Activated CD4-positive, alpha-beta memory T cell treated with anti-CD3 and anti-CD28 coated beads for 36 hours (primary cell): ENCODE measurements at regions of chrX and their contacts with region 1.

Region 1: GRCh38 chrX:130401415-130402207 is at the start of gene RBMX2:
- DNase-seq: peak; percentile 76
- H3K4me3 Mint-ChIP-seq: peak within 1 kb of the TSS; percentile 83
- H3K27ac Mint-ChIP-seq: peak within 1 kb of the TSS; percentile 87
- H3K4me1 Mint-ChIP-seq: peaks cover 26% of the 10 kb centered on the region
- H3K27me3 Mint-ChIP-seq: peaks cover 6% of the 10 kb centered on the region
- total RNA-seq, gene RBMX2: 28.4 to 29.8 TPM

Region 2: GRCh38 chrX:130186651-130187050 is 215.0 kb before region 1 on chrX:
- CTCF ChIA-PET with region 1: no interaction called
- POLR2A ChIA-PET with region 1: no interaction called
- intact Hi-C with region 1: no loop called
- DNase-seq: no peak
- H3K4me3 Mint-ChIP-seq: no peak overlapping the region
- H3K27ac Mint-ChIP-seq: no peak overlapping the region
- H3K4me1 Mint-ChIP-seq: peaks cover 9% of the 10 kb centered on the region
- H3K27me3 Mint-ChIP-seq: no peaks in the 10 kb centered on the region

Region 3: DNA sequence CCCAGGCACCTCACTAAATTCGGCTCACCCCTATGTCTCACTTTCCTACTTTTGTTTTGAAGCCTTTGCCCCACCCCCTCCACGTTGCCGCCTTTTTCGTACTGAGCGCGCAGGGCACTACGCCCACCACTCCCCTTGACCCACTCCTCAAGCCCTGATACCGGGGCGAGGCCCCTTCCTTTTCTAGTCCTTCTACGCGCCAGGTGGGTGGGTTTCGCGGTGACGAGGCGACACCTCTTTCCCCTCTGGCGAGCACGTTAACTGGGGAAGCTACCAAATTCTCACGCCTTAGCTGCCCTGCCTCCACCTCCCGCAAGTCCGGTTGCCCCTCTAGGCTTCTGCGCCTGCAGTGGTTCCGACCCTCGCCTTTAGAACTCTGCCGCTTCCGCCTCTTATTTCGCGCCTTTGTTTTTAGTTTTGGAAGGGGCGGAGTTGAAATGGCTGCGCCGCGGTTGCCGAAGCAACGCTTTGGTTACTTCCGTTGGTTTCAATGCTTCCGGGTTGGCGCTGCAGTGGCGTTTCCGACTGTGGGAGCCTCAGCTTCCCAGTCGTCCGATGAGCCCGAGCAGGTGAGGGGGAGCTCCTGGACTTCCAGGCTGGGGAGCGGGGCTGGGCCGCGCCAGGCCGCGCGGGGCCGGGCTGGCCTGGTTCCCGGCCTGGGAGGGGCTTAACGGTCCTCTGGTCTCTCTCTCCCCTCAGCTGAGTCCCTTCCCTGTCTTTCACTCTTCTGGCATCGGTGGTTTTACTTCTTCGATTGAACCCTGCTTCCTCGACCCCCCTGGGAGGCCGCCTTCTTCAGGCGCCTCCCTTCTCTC is 62.0 kb before region 1 on chrX and contains the start of gene SLC25A14:
- CTCF ChIA-PET with region 1: no interaction called
- POLR2A ChIA-PET with region 1: no interaction called
- intact Hi-C with region 1: loop called (anchors 2 kb)
- DNase-seq: peak; percentile 82
- H3K4me3 Mint-ChIP-seq: peak within 1 kb of the TSS; percentile 87
- H3K27ac Mint-ChIP-seq: peak within 1 kb of the TSS; percentile 88
- H3K4me1 Mint-ChIP-seq: peaks cover 10% of the 10 kb centered on the region
- H3K27me3 Mint-ChIP-seq: no peaks in the 10 kb centered on the region
- total RNA-seq, gene SLC25A14: 12.1 to 13.2 TPM